ENCODE measurements at regions of chr2 and their contacts with region 1.

Region 1: GRCh38 chr2:38264396-38265281 is 112.4 kb downstream of the ATL2 start:
- DNase-seq: no peak
- ATAC-seq: no peak
- H3K4me3 ChIP-seq: no peak overlapping the region
- H3K27ac ChIP-seq: peak overlapping the region; percentile 78
- H3K4me1 ChIP-seq: peaks cover 32% of the 10 kb centered on the region
- H3K27me3 ChIP-seq: no peaks in the 10 kb centered on the region
- CTCF ChIP-seq: no peak
- EP300 ChIP-seq: no peak
- POLR2A ChIP-seq: no peak
- RAD21 ChIP-seq: no peak

Region 2: DNA sequence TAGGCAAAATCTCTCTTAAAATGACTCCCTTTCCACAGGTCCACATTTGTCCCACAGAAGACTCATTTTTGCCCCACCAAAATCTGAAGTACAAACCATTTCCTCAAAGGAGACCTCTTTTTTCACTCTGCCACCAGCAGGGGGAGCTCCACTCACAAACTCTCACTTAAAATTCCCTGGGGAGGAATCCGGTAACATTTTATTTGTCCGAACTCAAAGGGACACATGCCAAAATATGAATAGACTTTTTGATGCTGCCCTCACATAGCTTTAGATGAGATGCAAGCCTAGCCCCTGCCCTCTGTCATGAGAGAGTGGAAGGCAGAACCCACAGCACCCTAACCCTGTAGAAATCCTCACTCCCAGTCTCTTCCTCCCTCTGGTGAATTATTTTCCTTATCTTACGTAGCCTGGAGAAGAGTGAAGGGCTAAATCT is 282.5 kb before region 1 on chr2:
- CTCF ChIA-PET with region 1: interaction called, 3 read pairs
- POLR2A ChIA-PET with region 1: no interaction called
- RAD21 ChIA-PET with region 1: interaction called, 3 read pairs
- SMC1A ChIA-PET with region 1: no interaction called
- in situ Hi-C with region 1: loop called (anchors 5 kb)
- intact Hi-C with region 1: no loop called
- DNase-seq: peak; percentile 30
- ATAC-seq: peak; percentile 61
- H3K4me3 ChIP-seq: no peak overlapping the region
- H3K27ac ChIP-seq: no peak overlapping the region
- H3K4me1 ChIP-seq: no peaks in the 10 kb centered on the region
- H3K27me3 ChIP-seq: no peaks in the 10 kb centered on the region
- CTCF ChIP-seq: peak; percentile 61 to 76 (median 70)
- EP300 ChIP-seq: no peak
- POLR2A ChIP-seq: no peak
- RAD21 ChIP-seq: peak; percentile 64

Region 3: DNA sequence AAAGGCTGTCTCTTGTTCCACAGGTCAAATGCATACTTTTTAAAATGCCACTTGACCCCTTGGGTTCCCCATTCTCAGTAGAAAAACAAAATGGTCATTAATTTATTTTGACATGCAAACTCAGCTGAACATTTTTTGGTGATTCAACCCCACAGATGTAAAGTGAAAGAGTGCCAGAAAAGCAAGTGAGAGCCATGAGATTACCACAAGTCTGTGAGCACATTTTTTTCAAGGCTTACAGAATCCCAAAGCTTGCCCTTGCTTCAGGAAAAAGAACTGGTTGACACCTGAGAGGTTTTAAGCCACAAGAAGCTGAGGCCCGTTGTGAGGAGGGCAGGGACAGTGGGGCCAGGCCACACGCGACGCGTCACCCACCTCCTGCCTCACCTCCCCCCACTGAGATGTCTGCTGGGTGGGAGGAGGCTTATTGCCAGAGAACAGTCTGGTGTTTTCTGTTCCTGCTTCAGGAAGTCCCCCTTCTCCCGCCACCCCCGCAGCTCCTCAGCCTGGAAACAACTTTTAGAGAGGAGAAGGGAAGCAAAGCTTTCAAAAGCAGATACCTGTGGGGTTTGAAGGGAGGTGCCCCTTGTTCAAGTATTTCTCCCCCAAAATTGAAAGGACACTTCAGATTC is 118.2 kb before region 1 on chr2:
- CTCF ChIA-PET with region 1: no interaction called
- POLR2A ChIA-PET with region 1: no interaction called
- RAD21 ChIA-PET with region 1: interaction called, 3 read pairs
- SMC1A ChIA-PET with region 1: interaction called, 4 read pairs
- in situ Hi-C with region 1: no loop called
- intact Hi-C with region 1: loop called (anchors 1 kb)
- DNase-seq: peak; percentile 71
- ATAC-seq: peak; percentile 91
- H3K4me3 ChIP-seq: no peak overlapping the region; the same call in 1 of the 2 replicates
- H3K27ac ChIP-seq: peak overlapping the region; percentile 89
- H3K4me1 ChIP-seq: peaks cover 31% of the 10 kb centered on the region
- H3K27me3 ChIP-seq: no peaks in the 10 kb centered on the region
- CTCF ChIP-seq: no peak
- EP300 ChIP-seq: no peak
- POLR2A ChIP-seq: no peak; the same call in 1 of the 2 replicates
- RAD21 ChIP-seq: no peak

Region 4: DNA sequence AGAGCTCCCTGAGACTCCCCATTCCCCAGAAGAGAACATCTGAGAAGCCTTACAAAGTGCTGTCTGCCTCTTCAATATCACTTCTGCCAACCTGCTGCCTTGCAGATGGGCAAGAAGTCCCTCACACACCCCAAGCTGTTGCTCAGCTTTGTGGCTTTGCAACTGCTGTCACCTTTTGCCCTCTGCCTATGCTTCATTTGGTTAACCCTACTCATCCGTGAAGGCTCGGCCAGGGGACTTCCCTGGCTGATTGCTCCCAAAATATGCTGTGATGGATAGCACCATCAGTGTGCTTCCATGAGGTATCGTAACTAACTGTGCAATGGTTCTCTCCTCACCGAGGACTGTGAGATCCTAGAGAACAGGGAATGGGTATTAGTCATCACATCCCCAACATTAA is 99.8 kb before region 1 on chr2:
- CTCF ChIA-PET with region 1: no interaction called
- POLR2A ChIA-PET with region 1: no interaction called
- RAD21 ChIA-PET with region 1: no interaction called
- SMC1A ChIA-PET with region 1: interaction called, 5 read pairs
- in situ Hi-C with region 1: no loop called
- intact Hi-C with region 1: loop called (anchors 5 kb)
- DNase-seq: peak; percentile 56
- ATAC-seq: peak; percentile 93
- H3K4me3 ChIP-seq: no peak overlapping the region
- H3K27ac ChIP-seq: no peak overlapping the region
- H3K4me1 ChIP-seq: peaks cover 34% of the 10 kb centered on the region
- H3K27me3 ChIP-seq: no peaks in the 10 kb centered on the region; a peak in 1 of 4 replicates
- CTCF ChIP-seq: no peak
- EP300 ChIP-seq: 0 out of 4 replicates have a peak, but pooled peaks of 1 of the 2 experiments have one; percentile 24
- POLR2A ChIP-seq: no peak
- RAD21 ChIP-seq: no peak

Region 5: DNA sequence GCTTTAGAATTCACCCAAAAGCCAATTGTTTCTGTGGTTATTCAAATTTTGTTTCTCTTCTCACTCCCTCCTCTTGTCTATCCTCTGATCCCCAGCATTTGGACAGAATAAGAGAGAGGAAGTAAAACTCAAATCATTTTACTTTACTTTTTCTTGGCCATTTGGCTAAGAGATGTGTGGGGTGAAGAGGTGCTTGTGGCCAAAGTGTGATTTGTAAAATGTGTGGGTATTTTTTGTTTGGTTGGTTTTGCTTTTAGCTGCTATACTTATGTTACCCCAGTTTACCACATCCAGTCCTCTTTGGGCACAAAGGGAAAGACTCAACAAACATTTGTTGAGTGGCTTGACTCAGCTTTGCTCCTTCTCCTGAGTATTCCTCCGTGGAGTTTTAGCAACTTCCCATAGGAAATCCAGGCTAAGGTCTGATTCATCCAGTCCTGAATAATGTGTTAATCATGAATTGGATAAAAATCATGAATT is 79.6 kb before region 1 on chr2:
- CTCF ChIA-PET with region 1: no interaction called
- POLR2A ChIA-PET with region 1: interaction called, 3 read pairs
- RAD21 ChIA-PET with region 1: interaction called, 3 read pairs
- SMC1A ChIA-PET with region 1: interaction called, 3 read pairs
- in situ Hi-C with region 1: no loop called
- intact Hi-C with region 1: loop called (anchors 2 kb)
- DNase-seq: peak; percentile 94
- ATAC-seq: peak; percentile 98
- H3K4me3 ChIP-seq: 0 out of 2 replicates have a peak overlapping the region, but pooled peaks have one; percentile 18
- H3K27ac ChIP-seq: peak overlapping the region; percentile 72
- H3K4me1 ChIP-seq: peaks cover 17% of the 10 kb centered on the region
- H3K27me3 ChIP-seq: no peaks in the 10 kb centered on the region
- CTCF ChIP-seq: no peak
- EP300 ChIP-seq: peak; percentile 48 to 65; a peak in 3 of 4 replicates
- POLR2A ChIP-seq: no peak
- RAD21 ChIP-seq: peak; percentile 18; the same call in 1 of the 2 replicates

Region 6: GRCh38 chr2:38284971-38285370 is 20.3 kb after region 1 on chr2:
- CTCF ChIA-PET with region 1: no interaction called
- POLR2A ChIA-PET with region 1: no interaction called
- RAD21 ChIA-PET with region 1: no interaction called
- SMC1A ChIA-PET with region 1: no interaction called
- in situ Hi-C with region 1: no loop called
- intact Hi-C with region 1: no loop called
- DNase-seq: no peak
- ATAC-seq: no peak
- H3K4me3 ChIP-seq: no peak overlapping the region
- H3K27ac ChIP-seq: no peak overlapping the region
- H3K4me1 ChIP-seq: no peaks in the 10 kb centered on the region
- H3K27me3 ChIP-seq: no peaks in the 10 kb centered on the region; a peak in 1 of 4 replicates
- CTCF ChIP-seq: no peak
- EP300 ChIP-seq: no peak
- POLR2A ChIP-seq: no peak
- RAD21 ChIP-seq: no peak

Measured in GM12878 (cell line).